Activated CD8-positive, alpha-beta T cell treated with anti-CD3 and anti-CD28 coated beads, Interleukin-2, amount 10 ng/mL, durations not matched to agents 7 days and 5 days (primary cell): ENCODE measurements at regions of chr14 and their contacts with region 1.

Region 1: DNA sequence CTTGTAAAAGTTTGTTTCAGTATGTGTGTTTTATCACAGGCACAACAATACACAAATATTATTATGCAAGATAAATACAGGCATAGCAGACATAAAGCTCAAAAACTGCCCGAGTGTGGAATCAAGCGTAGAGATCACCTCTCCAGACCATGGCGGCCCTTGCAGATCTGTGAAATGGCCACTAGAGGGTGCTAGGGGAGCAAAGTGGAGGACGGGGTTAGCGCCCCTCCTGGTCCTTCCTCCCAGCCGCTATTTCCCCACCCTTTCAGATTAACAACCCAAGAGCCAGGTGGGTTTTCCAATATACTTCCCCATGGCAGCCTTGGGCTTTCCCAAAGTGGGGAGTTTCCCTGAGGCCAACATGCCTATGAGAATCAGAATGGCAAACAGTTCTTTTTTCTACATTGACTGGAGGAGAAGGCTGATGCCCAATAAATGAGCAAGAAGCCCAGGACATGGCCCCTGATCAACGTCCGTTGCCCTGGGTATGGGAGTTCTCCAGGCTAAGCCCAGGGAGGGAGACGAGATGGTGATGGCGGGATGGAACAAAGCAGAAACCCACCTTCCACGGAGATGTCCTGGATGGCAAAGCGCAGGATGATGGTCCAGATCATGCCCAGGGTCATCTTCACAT is 67.4 kb downstream of the ACTN1 start:
- DNase-seq: peak; percentile 88
- ATAC-seq: peak; percentile 95
- H3K4me3 Mint-ChIP-seq: no peak overlapping the region
- H3K27ac Mint-ChIP-seq: no peak overlapping the region
- H3K4me1 Mint-ChIP-seq: peaks cover 21% of the 10 kb centered on the region
- H3K27me3 Mint-ChIP-seq: no peaks in the 10 kb centered on the region

Region 2: DNA sequence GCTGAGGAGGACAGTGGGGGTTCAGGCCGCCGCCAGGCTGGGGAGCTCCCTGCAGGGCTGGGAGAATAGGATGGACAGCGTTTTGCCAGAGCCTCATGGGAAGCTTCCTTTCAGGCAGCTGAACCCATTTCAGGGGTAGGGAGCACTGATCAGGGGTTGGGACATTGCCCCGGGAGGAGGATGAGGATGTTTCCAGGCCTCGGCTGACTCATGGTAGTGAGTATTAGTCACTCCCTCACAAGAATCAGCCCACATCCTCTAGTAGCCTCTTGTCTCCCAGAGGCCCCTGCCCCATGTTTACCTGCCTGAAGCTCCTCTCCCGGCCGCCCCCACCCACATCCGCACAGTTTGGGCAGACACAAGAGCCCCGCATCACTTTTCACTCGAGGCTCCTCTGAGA is 208.6 kb before region 1 on chr14:
- CTCF ChIA-PET with region 1: no interaction called
- POLR2A ChIA-PET with region 1: no interaction called
- DNase-seq: no peak
- ATAC-seq: no peak
- H3K4me3 Mint-ChIP-seq: no peak overlapping the region
- H3K27ac Mint-ChIP-seq: no peak overlapping the region
- H3K4me1 Mint-ChIP-seq: no peaks in the 10 kb centered on the region
- H3K27me3 Mint-ChIP-seq: peaks cover 5% of the 10 kb centered on the region

Region 3: GRCh38 chr14:68771607-68772006 is 140.1 kb before region 1 on chr14:
- CTCF ChIA-PET with region 1: no interaction called
- POLR2A ChIA-PET with region 1: no interaction called
- DNase-seq: peak; percentile 47
- ATAC-seq: peak; percentile 73
- H3K4me3 Mint-ChIP-seq: peak overlapping the region; percentile 46
- H3K27ac Mint-ChIP-seq: peak overlapping the region; percentile 68
- H3K4me1 Mint-ChIP-seq: peaks cover 57% of the 10 kb centered on the region
- H3K27me3 Mint-ChIP-seq: no peaks in the 10 kb centered on the region

Region 4: DNA sequence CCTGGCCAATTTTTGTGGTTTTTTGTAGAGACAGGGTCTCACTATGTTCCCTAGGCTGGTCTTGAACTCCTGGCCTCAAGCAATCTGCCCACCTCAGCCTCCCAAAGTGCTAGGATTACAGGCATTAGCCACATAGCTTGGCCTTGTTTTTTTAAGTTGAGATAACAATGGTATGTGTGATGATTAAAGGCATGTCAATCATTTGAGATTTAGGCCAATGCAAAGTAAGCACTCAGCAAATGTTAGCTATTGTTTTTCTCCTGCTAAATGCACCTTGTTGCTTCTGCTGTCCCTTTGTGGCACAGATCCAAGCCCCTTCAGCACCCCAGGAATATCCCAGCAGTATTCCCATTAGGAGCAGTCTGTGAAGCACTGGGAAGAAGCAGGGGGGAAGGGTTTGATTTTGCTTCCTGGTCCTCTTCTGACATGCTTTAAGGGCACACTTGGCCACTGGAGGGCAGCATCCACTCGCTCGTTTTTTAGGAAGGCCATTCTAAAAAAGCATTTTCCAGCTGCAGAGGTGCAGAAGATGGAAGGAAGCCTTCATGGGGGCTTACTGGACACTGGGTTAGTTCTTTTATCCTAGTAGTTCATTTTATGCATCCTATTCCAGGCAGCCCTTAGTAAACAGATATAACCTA is 48.6 kb before region 1 on chr14:
- CTCF ChIA-PET with region 1: interaction called, 11 read pairs
- POLR2A ChIA-PET with region 1: no interaction called
- DNase-seq: peak; percentile 84
- ATAC-seq: peak; percentile 67
- H3K4me3 Mint-ChIP-seq: no peak overlapping the region
- H3K27ac Mint-ChIP-seq: no peak overlapping the region
- H3K4me1 Mint-ChIP-seq: peaks cover 2% of the 10 kb centered on the region
- H3K27me3 Mint-ChIP-seq: no peaks in the 10 kb centered on the region

Region 5: DNA sequence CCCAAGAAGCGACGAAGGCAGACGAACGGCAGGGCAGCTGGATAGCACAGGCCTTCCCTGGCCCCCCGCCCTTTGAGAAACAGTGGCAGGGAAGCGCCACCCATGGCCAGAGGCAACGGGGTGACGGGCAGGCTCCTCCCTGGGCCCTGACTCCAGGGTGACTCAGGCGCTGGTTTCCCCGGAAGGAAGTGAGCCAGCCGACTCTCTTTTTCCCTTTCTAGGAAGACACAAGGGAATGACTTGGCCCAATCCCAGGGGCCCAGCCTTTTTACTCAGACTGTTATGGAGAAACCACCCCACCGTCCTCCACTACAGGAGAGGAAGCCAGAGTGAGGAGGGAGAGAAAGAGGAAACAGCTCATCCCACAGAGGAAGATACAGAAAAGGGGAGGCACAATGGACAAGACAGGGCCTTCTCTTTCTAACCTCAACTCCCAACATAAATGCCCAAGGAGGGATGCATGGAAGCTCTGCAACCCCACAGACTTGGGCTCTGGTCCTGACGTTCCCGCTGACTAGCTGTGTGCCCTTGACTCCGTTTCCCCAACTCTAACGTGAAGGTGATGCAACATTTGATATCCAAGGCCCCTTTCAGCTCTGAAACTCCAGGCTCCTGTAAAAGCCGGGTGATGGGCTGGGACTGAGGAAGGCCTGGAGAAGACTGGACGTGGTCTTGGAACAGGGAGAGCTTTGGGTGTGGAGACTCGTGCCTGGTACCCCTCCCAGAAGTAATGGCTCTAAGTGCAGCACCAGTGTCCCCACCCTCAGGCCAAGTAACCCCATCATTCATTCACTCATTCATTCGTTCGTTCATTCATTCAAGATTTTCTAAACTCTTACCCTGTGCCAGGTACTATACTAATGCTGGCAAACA is 39.6 kb after region 1 on chr14:
- CTCF ChIA-PET with region 1: interaction called, 19 read pairs
- POLR2A ChIA-PET with region 1: no interaction called
- DNase-seq: no peak
- ATAC-seq: no peak
- H3K4me3 Mint-ChIP-seq: no peak overlapping the region
- H3K27ac Mint-ChIP-seq: no peak overlapping the region
- H3K4me1 Mint-ChIP-seq: peaks cover 85% of the 10 kb centered on the region
- H3K27me3 Mint-ChIP-seq: no peaks in the 10 kb centered on the region

Region 6: GRCh38 chr14:68986926-68987652 is 75.4 kb after region 1 on chr14:
- CTCF ChIA-PET with region 1: interaction called, 15 read pairs
- POLR2A ChIA-PET with region 1: no interaction called
- DNase-seq: no peak
- ATAC-seq: no peak
- H3K4me3 Mint-ChIP-seq: no peak overlapping the region
- H3K27ac Mint-ChIP-seq: no peak overlapping the region
- H3K4me1 Mint-ChIP-seq: peaks cover 23% of the 10 kb centered on the region
- H3K27me3 Mint-ChIP-seq: peaks cover 11% of the 10 kb centered on the region

Region 7: DNA sequence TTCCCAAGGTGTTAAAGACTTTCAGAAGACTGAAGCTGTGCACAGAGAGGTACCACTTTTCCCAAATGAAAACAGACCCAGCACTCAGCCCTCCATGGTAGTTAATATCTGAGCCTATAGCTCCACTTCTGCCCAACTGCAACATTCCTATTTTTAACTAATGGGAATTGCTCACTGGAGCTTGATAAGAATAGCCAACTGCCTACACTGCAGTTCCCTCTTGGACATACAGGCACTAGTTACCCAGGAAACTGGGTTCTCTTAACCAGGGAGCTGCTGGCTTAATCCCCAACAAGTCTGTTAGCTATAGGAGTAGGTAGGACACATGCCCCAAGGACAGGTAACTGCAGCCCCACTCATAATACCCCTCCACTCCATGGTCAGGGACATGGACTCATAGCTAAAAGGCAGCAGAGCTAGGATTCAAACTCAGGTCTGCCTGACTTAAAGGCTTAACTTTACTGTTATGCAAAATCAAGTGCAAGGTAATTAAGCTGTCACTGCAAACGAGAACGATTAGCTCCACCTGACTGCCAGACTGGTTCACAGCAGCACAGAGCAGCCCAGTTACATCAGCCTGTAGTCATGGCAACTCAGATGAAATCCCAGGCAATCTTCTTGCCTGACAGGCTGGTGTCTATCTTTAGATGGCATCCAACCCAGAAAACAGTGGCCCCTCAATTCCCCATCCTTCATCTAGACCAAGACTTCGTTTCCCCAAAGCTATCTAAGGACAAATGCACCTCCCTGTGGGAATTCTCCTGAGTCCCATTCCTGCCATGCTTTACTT is 144.5 kb after region 1 on chr14:
- CTCF ChIA-PET with region 1: interaction called, 19 read pairs
- POLR2A ChIA-PET with region 1: no interaction called
- DNase-seq: peak; percentile 30
- ATAC-seq: no peak
- H3K4me3 Mint-ChIP-seq: no peak overlapping the region
- H3K27ac Mint-ChIP-seq: no peak overlapping the region
- H3K4me1 Mint-ChIP-seq: peaks cover 28% of the 10 kb centered on the region
- H3K27me3 Mint-ChIP-seq: no peaks in the 10 kb centered on the region

Region 8: GRCh38 chr14:69101331-69101826 is 189.7 kb after region 1 on chr14:
- CTCF ChIA-PET with region 1: interaction called, 13 read pairs
- POLR2A ChIA-PET with region 1: no interaction called
- DNase-seq: peak; percentile 28
- ATAC-seq: peak; percentile 68
- H3K4me3 Mint-ChIP-seq: no peak overlapping the region
- H3K27ac Mint-ChIP-seq: peak overlapping the region; percentile 13
- H3K4me1 Mint-ChIP-seq: peaks cover 5% of the 10 kb centered on the region
- H3K27me3 Mint-ChIP-seq: no peaks in the 10 kb centered on the region